Caco-2 (cell line): ENCODE measurements at regions of chr5 and their contacts with region 1.

Region 1: DNA sequence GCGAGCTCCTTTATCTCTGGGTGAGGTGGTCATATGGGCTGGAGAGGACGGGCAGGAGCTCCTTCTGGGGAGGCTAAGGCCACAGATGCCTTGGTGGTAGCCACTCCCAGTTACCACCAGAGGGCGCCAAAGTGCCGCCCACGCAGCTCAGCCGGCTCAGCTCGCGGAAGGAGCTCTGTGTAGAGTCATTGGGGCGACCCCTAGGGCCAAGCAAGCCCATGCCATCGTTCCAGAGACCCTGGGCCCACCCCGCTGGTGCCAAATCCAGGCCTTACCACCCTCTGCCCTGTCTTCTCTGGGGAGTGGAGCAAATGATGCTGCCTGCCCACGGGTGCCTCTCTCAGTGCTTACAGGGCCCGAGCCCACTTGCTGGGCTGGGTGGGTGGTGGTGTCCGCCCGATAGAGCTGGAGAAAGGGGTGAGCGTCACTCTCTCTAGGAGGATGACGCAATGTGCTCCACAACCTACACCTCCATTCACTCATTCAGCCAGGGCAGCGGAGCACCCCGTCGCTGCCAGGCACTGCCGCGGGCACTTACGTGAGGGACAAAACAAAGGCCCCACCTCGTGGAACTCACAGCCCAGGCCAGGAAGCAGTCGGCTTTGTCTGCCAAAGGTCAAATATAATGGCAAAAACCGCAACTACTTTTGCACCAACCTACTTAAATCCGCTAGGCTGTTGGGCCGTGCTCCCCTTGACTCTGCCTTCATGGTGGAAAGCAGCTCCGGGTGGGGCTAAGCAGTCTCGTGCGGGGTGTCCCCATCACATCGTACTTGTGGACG is 13.8 kb downstream of the TSPAN17 start:
- DNase-seq: peak; percentile 77 to 83
- H3K4me3 ChIP-seq: no peak overlapping the region
- H3K4me3 Mint-ChIP-seq: no peak overlapping the region
- H3K27ac Mint-ChIP-seq: no peak overlapping the region
- H3K4me1 ChIP-seq: no peaks in the 10 kb centered on the region
- H3K4me1 Mint-ChIP-seq: no peaks in the 10 kb centered on the region
- H3K27me3 ChIP-seq: no peaks in the 10 kb centered on the region
- H3K27me3 Mint-ChIP-seq: peaks cover 6% of the 10 kb centered on the region
- CTCF ChIP-seq: peak; percentile 97 to 98

Region 2: DNA sequence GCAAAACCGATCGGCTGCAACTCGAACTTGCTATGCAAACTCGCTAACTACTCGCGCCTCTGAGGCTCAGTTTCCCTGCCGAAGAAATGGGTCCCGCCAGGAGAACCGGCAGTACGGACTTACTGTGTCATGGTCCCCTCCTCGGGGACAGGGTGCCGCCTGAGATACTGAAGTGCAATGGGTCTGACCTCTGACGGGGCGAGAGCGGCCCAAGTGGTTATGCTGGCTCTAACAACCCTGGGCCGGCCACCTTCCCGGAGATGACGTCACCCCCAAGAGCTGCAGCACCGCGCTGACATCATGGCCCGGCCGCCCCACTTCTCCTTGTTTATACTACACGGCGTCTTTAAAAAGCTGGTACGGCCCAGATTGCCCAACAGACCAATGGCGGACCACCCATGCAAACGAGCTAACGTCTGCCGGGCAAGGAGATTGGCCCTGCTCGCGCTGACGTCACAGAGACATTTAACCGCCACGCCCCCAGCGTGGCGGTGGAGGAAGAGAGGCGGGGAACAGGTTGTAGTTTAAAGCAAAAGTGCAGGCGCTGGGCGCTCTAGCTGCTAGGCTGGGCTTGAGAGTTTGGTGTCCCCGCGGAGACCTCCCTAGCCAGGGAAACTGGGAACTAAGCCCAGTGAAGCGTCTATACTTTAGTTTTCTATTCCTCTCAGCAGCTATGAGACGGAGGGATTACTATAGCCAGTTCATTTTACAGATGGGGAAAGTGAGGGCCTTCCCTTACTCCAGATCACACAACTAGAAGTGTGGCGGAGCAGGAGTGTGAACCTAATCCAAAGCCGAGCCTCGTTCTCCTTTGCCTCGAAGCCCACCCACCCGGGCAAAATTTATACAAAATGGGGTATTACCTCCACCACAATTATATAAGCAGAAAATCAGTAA is 123.2 kb before region 1 on chr5:
- CTCF ChIA-PET with region 1: interaction called, 16 read pairs
- POLR2A ChIA-PET with region 1: no interaction called
- intact Hi-C with region 1: no loop called
- DNase-seq: peak; percentile 97 to 100
- H3K4me3 ChIP-seq: peak overlapping the region; percentile 90
- H3K4me3 Mint-ChIP-seq: peak overlapping the region; percentile 96
- H3K27ac Mint-ChIP-seq: peak overlapping the region; percentile 96
- H3K4me1 ChIP-seq: peaks cover 14% of the 10 kb centered on the region
- H3K4me1 Mint-ChIP-seq: peaks cover 29% of the 10 kb centered on the region
- H3K27me3 ChIP-seq: no peaks in the 10 kb centered on the region
- H3K27me3 Mint-ChIP-seq: no peaks in the 10 kb centered on the region
- CTCF ChIP-seq: no peak

Region 3: GRCh38 chr5:176647030-176647866 is 13.8 kb before region 1 on chr5 and contains the start of gene TSPAN17:
- CTCF ChIA-PET with region 1: interaction called, 34 read pairs
- POLR2A ChIA-PET with region 1: interaction called, 3 read pairs
- intact Hi-C with region 1: no loop called
- DNase-seq: peak; percentile 100
- H3K4me3 ChIP-seq: peak within 1 kb of the TSS; percentile 72
- H3K4me3 Mint-ChIP-seq: peak within 1 kb of the TSS; percentile 71
- H3K27ac Mint-ChIP-seq: peak within 1 kb of the TSS; percentile 63
- H3K4me1 ChIP-seq: peaks cover 10% of the 10 kb centered on the region
- H3K4me1 Mint-ChIP-seq: no peaks in the 10 kb centered on the region
- H3K27me3 ChIP-seq: no peaks in the 10 kb centered on the region
- H3K27me3 Mint-ChIP-seq: no peaks in the 10 kb centered on the region
- CTCF ChIP-seq: no peak
- total RNA-seq, gene TSPAN17: 19.6 and 20.5 TPM in 2 replicates

Region 4: GRCh38 chr5:176725521-176726280 is 64.7 kb after region 1 on chr5:
- CTCF ChIA-PET with region 1: no interaction called
- POLR2A ChIA-PET with region 1: no interaction called
- intact Hi-C with region 1: no loop called
- DNase-seq: no peak
- H3K4me3 ChIP-seq: no peak overlapping the region
- H3K4me3 Mint-ChIP-seq: no peak overlapping the region
- H3K27ac Mint-ChIP-seq: no peak overlapping the region
- H3K4me1 ChIP-seq: no peaks in the 10 kb centered on the region
- H3K4me1 Mint-ChIP-seq: peaks cover 7% of the 10 kb centered on the region
- H3K27me3 ChIP-seq: peaks cover 2% of the 10 kb centered on the region
- H3K27me3 Mint-ChIP-seq: peaks cover 27% of the 10 kb centered on the region
- CTCF ChIP-seq: no peak

Region 5: DNA sequence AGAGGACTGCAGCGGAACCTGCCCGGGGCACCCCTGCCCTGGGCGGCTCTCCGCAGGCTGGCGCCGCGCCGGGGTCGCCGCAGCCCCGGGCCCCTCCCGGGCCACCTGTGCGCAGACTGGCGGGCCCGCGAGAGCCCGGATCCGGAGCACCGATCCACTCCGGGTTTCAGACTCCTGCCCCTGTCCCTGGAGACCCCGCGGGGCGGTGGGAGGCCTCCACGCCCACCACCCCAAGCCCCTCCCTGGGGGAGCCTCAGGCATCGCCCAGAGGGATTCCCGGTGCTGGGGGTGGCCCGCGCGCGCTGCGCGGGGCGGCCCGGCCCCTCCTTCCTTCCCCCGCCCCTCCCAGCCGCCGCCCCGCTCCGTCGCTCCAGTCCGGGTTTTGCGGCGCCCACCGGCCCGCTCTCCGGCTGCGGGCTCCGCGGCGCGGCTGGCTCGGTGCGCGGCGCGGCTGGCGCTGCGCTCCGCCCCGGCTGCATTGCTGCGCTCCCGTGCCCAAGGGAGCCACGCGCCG is 149.1 kb after region 1 on chr5 and contains the start of gene UNC5A:
- CTCF ChIA-PET with region 1: interaction called, 9 read pairs
- POLR2A ChIA-PET with region 1: no interaction called
- intact Hi-C with region 1: loop called (anchors 5 kb)
- DNase-seq: peak in 1 of 2 experiments; percentile 85
- H3K4me3 ChIP-seq: peak within 1 kb of the TSS; percentile 42
- H3K4me3 Mint-ChIP-seq: peak within 1 kb of the TSS; percentile 85
- H3K27ac Mint-ChIP-seq: no peak within 1 kb of the TSS
- H3K4me1 ChIP-seq: peaks cover 7% of the 10 kb centered on the region
- H3K4me1 Mint-ChIP-seq: peaks cover 15% of the 10 kb centered on the region
- H3K27me3 ChIP-seq: peaks cover 6% of the 10 kb centered on the region; the same call in 1 of the 2 replicates
- H3K27me3 Mint-ChIP-seq: peaks cover 30% of the 10 kb centered on the region
- CTCF ChIP-seq: no peak
- total RNA-seq, gene UNC5A: 0.14 TPM in 1 of 2 replicates, not detected in the other

Region 6: DNA sequence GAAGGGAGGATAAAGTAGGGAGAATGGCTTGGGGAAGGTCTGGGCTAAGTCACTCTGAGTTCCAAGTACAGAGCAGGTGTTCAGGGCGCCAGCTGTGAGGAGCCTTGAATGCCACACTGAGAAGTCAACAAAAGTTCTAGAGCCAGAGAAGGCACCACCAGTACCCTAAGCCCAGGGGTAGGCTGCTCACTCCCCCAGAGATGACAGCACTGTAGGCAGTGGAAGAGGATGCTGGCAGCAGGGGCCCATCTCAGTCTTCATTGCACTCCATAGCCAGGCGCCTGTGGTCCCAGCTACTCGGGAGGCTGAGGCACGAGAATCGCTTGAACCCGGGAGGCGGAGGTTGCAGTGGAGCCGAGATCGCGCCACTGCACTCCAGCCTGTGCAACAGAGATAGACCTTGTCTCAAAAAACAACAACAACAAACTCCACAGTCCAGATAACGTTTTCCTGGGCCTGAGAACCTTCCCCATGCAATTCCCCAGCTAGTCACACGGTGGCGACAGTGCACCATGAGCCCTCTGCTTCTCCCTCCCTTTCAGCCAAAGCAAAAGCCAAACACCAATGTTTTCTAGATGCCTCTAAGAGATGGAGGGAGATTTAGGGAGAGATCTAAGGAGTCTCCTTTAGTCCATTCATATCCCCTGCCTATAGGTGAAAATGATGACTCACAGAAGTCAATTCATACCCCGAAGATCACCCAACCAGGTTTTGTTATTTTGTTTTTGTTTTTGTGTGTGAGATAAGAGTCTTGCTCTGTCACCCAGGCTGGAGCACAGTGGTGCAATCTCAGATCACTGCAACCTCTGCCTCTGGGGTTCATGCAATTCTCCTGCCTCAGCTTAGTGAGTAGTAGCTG is 452.7 kb after region 1 on chr5:
- CTCF ChIA-PET with region 1: interaction called, 7 read pairs
- POLR2A ChIA-PET with region 1: no interaction called
- intact Hi-C with region 1: loop called (anchors 5 kb)
- DNase-seq: peak; percentile 65 to 85
- H3K4me3 ChIP-seq: no peak overlapping the region
- H3K4me3 Mint-ChIP-seq: no peak overlapping the region
- H3K27ac Mint-ChIP-seq: no peak overlapping the region
- H3K4me1 ChIP-seq: peaks cover 4% of the 10 kb centered on the region; the same call in 1 of the 2 replicates
- H3K4me1 Mint-ChIP-seq: peaks cover 22% of the 10 kb centered on the region
- H3K27me3 ChIP-seq: no peaks in the 10 kb centered on the region
- H3K27me3 Mint-ChIP-seq: no peaks in the 10 kb centered on the region
- CTCF ChIP-seq: peak; percentile 95 to 99